GM12878 (cell line): ENCODE measurements at regions of chr1 and their contacts with region 1.

Region 1: DNA sequence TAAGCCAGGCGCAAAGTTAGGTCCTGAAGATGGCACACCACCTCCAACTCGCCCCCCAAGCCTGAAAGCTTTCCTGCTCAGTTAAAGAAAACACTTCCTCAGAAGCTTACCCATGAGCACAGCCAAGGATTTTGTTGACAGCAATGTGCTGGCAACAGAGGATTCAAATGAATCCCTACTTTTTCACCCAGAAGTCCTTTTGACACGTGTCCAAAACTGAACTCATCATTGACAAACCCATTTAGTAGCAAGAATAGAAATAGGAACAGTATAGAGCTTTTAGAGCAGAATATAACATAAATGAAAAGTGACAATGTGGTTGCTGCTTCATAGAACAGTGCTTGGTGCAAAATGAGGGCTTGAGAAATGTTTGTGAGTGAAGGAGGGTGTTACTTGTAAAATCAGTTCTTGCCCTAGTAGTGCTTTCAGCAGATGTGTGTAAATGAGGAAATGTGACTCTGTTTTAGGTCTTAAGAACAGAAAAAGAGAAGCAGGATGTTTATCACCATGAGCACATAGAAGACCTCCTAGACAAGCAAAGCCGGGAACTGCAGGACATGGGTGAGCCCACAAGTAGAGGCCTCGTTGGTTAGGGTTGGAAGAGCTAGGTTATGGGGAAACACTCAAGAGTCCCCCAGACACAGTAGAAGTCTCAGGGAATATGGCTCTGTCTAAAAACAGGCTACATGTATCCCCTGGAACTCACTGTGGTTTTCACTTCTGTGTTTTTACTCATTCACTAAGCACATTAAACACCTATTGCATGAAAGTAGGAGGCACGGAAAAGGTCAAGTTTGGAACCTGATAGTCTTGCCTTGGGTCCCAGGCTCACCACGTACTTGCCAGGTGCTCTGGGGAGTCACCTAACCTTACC is 48.6 kb upstream of the TMEM125 start:
- DNase-seq: peak; percentile 75
- ATAC-seq: peak; percentile 92
- H3K4me3 ChIP-seq: peak overlapping the region; percentile 11; the same call in 1 of the 2 replicates
- H3K27ac ChIP-seq: peak overlapping the region; percentile 89
- H3K4me1 ChIP-seq: peaks cover 21% of the 10 kb centered on the region
- H3K27me3 ChIP-seq: no peaks in the 10 kb centered on the region
- CTCF ChIP-seq: no peak
- EP300 ChIP-seq: peak; percentile 12 to 62; a peak in 1 of 4 replicates
- POLR2A ChIP-seq: no peak
- RAD21 ChIP-seq: no peak

Region 2: GRCh38 chr1:43199064-43199726 is 21.9 kb before region 1 on chr1:
- CTCF ChIA-PET with region 1: interaction called, 13 read pairs
- POLR2A ChIA-PET with region 1: interaction called, 6 read pairs
- RAD21 ChIA-PET with region 1: interaction called, 9 read pairs
- SMC1A ChIA-PET with region 1: interaction called, 4 read pairs
- in situ Hi-C with region 1: no loop called
- intact Hi-C with region 1: loop called (anchors 2 kb)
- DNase-seq: peak; percentile 88
- ATAC-seq: peak; percentile 93
- H3K4me3 ChIP-seq: peak overlapping the region; percentile 33
- H3K27ac ChIP-seq: peak overlapping the region; percentile 81
- H3K4me1 ChIP-seq: peaks cover 17% of the 10 kb centered on the region
- H3K27me3 ChIP-seq: no peaks in the 10 kb centered on the region
- CTCF ChIP-seq: no peak
- EP300 ChIP-seq: peak; percentile 93 to 96
- POLR2A ChIP-seq: peak; percentile 46; the same call in 1 of the 2 replicates
- RAD21 ChIP-seq: no peak

Region 3: GRCh38 chr1:43205671-43206070 is 15.5 kb before region 1 on chr1:
- CTCF ChIA-PET with region 1: interaction called, 13 read pairs
- POLR2A ChIA-PET with region 1: interaction called, 4 read pairs
- RAD21 ChIA-PET with region 1: interaction called, 9 read pairs
- SMC1A ChIA-PET with region 1: no interaction called
- in situ Hi-C with region 1: no loop called
- intact Hi-C with region 1: no loop called
- DNase-seq: no peak
- ATAC-seq: no peak
- H3K4me3 ChIP-seq: no peak overlapping the region
- H3K27ac ChIP-seq: peak overlapping the region; percentile 40; the same call in 1 of the 2 replicates
- H3K4me1 ChIP-seq: peaks cover 20% of the 10 kb centered on the region
- H3K27me3 ChIP-seq: no peaks in the 10 kb centered on the region
- CTCF ChIP-seq: no peak
- EP300 ChIP-seq: no peak
- POLR2A ChIP-seq: no peak
- RAD21 ChIP-seq: no peak